Adrenal gland (tissue), 19 donors: ENCODE measurements at regions of chr1 and their contacts with region 1.

Region 1: GRCh38 chr1:212368073-212368484 is 46.6 kb downstream of the PACC1 start:
- DNase-seq: peak; percentile 47 to 81 (median 52)
- H3K4me3 ChIP-seq: no peak overlapping the region
- H3K27ac ChIP-seq: no peak overlapping the region
- H3K4me1 ChIP-seq: no peaks in the 10 kb centered on the region
- H3K27me3 ChIP-seq: no peaks in the 10 kb centered on the region
- CTCF ChIP-seq: peak; percentile 41 to 84 (median 80)
- POLR2A ChIP-seq: no peak

Region 2: GRCh38 chr1:212055333-212055732 is 312.7 kb before region 1 on chr1:
- intact Hi-C with region 1: loop called in 1 of 2 experiments (anchors 5 kb)
- DNase-seq: no peak
- H3K4me3 ChIP-seq: no peak overlapping the region
- H3K27ac ChIP-seq: no peak overlapping the region
- H3K4me1 ChIP-seq: no peaks in the 10 kb centered on the region
- H3K27me3 ChIP-seq: no peaks in the 10 kb centered on the region
- CTCF ChIP-seq: no peak
- POLR2A ChIP-seq: no peak

Region 3: GRCh38 chr1:212070720-212071302 is 297.3 kb before region 1 on chr1:
- intact Hi-C with region 1: loop called in 1 of 2 experiments (anchors 5 kb)
- DNase-seq: no peak
- H3K4me3 ChIP-seq: no peak overlapping the region
- H3K27ac ChIP-seq: no peak overlapping the region
- H3K4me1 ChIP-seq: no peaks in the 10 kb centered on the region
- H3K27me3 ChIP-seq: no peaks in the 10 kb centered on the region
- CTCF ChIP-seq: peak; percentile 58 to 92 (median 78)
- POLR2A ChIP-seq: no peak

Region 4: GRCh38 chr1:212477014-212477679 is 109.1 kb after region 1 on chr1:
- intact Hi-C with region 1: no loop called
- DNase-seq: peak; percentile 84 to 95 (median 87)
- H3K4me3 ChIP-seq: no peak overlapping the region
- H3K27ac ChIP-seq: no peak overlapping the region
- H3K4me1 ChIP-seq: peaks cover 0 to 3% of the 10 kb centered on the region in 2 donors
- H3K27me3 ChIP-seq: peaks cover 6% of the 10 kb centered on the region
- CTCF ChIP-seq: peak; percentile 72 to 90 (median 86)
- POLR2A ChIP-seq: no peak